Heart left ventricle (tissue), 16 donors: ENCODE measurements at regions of chr4 and their contacts with region 1.

Region 1: DNA sequence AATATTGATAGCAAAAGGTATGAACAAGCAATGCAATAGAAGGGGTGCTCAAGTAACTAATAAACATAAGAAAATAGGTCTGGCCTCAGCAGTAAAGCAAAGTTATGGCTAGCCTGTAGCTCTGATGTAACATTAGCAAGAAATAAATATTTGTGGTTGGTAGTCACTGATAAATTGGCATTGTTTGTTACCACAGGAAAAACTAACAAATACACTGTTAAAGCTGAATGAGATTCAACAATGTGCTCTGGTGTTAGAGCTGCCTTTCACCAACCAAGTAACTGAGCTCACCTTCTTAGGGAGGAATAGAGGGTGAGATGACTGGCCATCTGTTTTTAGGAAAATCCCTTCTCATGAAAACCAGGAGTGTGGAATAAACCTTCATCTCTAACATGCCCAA is 71.4 kb downstream of the AREG start:
- DNase-seq: no peak
- ATAC-seq: no peak
- H3K4me3 ChIP-seq: no peak overlapping the region
- H3K27ac ChIP-seq: no peak overlapping the region
- H3K4me1 ChIP-seq: no peaks in the 10 kb centered on the region
- H3K27me3 ChIP-seq: no peaks in the 10 kb centered on the region
- CTCF ChIP-seq: no peak
- POLR2A ChIP-seq: no peak

Region 2: DNA sequence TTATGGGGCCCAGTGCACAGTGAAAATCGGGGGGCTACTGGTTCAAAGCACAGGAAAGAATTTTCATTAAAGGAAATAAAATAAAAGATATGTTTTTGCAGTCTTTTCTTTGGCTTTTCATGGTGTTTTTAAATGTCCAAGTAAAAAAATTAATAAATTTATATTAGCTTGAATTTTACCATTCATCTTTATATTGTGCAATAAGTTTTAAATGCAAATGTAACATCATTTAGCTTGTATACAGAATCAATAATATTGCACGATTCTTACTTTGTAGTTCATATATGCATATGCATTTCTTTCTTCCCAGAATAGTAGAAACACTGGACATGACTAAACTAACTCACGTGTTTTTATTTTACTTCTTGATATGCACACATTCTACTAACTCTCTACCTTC is 40.4 kb before region 1 on chr4:
- intact Hi-C with region 1: loop called in 1 of 10 experiments (anchors 2 kb)
- DNase-seq: no peak
- ATAC-seq: no peak
- H3K4me3 ChIP-seq: no peak overlapping the region
- H3K27ac ChIP-seq: no peak overlapping the region
- H3K4me1 ChIP-seq: peaks cover 0 to 14% (median 0%) of the 10 kb centered on the region in 12 donors
- H3K27me3 ChIP-seq: no peaks in the 10 kb centered on the region
- CTCF ChIP-seq: no peak
- POLR2A ChIP-seq: no peak